Heart right ventricle (tissue), 16 donors: ENCODE measurements at regions of chr6 and their contacts with region 1.

Region 1: GRCh38 chr6:88492824-88493223 is 326.7 kb upstream of the CNR1 start:
- DNase-seq: no peak
- ATAC-seq: no peak
- H3K4me3 ChIP-seq: no peak overlapping the region
- H3K27ac ChIP-seq: no peak overlapping the region
- H3K4me1 ChIP-seq: no peaks in the 10 kb centered on the region
- H3K27me3 ChIP-seq: no peaks in the 10 kb centered on the region
- CTCF ChIP-seq: peak in 7 of 9 donors; percentile 38 to 61 (median 48)

Region 2: DNA sequence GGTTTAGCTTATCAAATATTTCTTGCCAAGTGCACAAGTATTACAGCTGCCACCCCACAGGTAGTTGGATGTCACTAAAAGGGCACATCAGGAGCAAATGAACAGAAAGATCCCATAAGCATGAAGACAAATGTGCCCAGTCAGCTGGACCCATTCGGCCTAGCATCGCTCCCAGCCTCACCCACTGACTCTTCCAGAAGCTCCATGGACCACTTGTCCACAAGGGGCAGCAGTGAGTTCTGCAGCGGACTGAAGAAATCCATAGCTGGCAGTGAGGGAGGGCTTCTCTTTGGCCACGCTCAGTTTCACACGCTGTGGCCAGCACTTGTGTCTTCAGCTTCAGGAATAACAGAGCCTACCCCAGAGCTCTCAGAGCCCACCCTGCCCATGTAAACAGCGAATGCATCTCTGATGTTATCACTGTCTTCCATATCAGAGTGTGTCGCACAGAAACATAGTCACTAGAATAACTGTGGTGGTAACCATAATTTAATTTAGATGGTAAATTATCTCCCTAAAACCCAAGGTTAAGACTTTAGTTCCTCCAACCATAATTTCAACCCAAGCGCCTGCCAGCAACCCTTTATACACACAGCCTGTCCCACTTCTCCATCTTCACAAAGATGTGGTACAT is 1413.7 kb before region 1 on chr6:
- intact Hi-C with region 1: loop called in 1 of 10 experiments (anchors 10 kb)
- DNase-seq: peak; percentile 31 to 52
- ATAC-seq: peak in 5 of 8 donors; percentile 43 to 80 (median 58)
- H3K4me3 ChIP-seq: no peak overlapping the region
- H3K27ac ChIP-seq: no peak overlapping the region
- H3K4me1 ChIP-seq: no peaks in the 10 kb centered on the region
- H3K27me3 ChIP-seq: peaks cover 0 to 5% (median 0%) of the 10 kb centered on the region in 7 donors
- CTCF ChIP-seq: peak; percentile 60 to 94 (median 83)

Region 3: DNA sequence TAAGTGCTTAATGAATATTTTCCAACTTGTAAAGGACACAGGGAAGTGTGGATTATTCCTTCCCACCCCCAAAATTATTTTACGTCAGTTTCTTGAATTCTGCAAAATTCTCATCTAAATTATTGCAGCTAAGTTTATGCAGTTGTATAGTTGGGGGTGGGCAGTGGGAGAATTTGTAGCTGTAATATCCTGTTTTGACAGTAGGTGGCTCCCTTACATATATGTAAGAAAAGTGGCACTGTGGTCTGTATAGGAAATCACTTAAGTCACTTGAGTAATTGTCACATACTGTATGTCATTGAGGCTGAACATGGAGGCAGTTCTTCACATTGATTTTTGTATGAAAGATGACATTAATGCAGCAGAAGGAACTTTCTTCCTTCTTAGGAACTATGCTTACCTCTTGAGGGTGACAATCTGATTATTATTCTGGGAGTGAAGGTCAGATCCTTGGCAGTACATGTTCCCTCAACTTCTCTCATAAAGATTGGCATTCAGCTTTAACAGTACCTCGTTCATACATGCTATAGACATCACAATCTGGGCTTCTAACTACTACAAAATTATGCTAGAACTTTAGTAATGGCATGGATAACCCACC is 1099.7 kb before region 1 on chr6:
- intact Hi-C with region 1: loop called in 1 of 10 experiments (anchors 10 kb)
- DNase-seq: peak in 1 of 2 donors; percentile 30
- ATAC-seq: peak in 6 of 8 donors; percentile 64 to 83 (median 78)
- H3K4me3 ChIP-seq: no peak overlapping the region
- H3K27ac ChIP-seq: no peak overlapping the region
- H3K4me1 ChIP-seq: peaks cover 0 to 3% (median 0%) of the 10 kb centered on the region in 9 donors
- H3K27me3 ChIP-seq: no peaks in the 10 kb centered on the region
- CTCF ChIP-seq: peak; percentile 58 to 82 (median 77)

Region 4: DNA sequence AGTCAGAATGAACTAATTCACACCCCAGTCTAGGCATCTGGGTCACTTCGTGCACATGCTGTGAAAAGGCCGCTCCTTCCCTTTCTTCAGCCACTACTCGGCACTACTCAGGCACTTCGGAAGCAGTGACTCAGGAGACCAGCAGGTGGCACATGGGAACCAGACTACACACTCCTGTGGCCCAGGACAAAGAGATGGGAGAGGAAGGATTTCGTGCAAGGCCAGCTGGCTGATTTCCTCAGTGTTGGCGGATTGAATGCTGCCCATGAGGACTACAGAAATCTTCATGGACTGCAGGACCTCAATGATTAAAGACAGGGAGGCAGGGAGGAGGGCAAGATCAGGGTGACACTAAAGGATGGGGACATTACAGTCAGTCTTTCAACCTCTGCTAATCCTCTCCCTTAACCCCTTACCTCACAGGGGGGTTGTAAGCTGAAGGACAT is 563.0 kb before region 1 on chr6:
- intact Hi-C with region 1: loop called in 6 of 10 experiments (anchors 5 to 10 kb)
- DNase-seq: peak; percentile 68 to 82
- ATAC-seq: peak; percentile 89 to 98 (median 96)
- H3K4me3 ChIP-seq: no peak overlapping the region
- H3K27ac ChIP-seq: no peak overlapping the region
- H3K4me1 ChIP-seq: peaks cover 0 to 8% (median 0%) of the 10 kb centered on the region in 9 donors
- H3K27me3 ChIP-seq: no peaks in the 10 kb centered on the region
- CTCF ChIP-seq: peak; percentile 55 to 84 (median 80)